Dorsolateral prefrontal cortex (tissue), 120 donors: ENCODE measurements at regions of chr10 and their contacts with region 1.

Region 1: GRCh38 chr10:43348511-43349312 is 22.7 kb upstream of the FXYD4 start:
- DNase-seq: peak; percentile 67 to 97 (median 93)
- H3K4me3 ChIP-seq: peak overlapping the region in 13 of 59 donors; percentile 1 to 64 (median 25)
- H3K27ac ChIP-seq: peak overlapping the region; percentile 49 to 96 (median 89)
- H3K27me3 ChIP-seq: no peaks in the 10 kb centered on the region
- CTCF ChIP-seq: peak; percentile 80 to 99 (median 96)

Region 2: DNA sequence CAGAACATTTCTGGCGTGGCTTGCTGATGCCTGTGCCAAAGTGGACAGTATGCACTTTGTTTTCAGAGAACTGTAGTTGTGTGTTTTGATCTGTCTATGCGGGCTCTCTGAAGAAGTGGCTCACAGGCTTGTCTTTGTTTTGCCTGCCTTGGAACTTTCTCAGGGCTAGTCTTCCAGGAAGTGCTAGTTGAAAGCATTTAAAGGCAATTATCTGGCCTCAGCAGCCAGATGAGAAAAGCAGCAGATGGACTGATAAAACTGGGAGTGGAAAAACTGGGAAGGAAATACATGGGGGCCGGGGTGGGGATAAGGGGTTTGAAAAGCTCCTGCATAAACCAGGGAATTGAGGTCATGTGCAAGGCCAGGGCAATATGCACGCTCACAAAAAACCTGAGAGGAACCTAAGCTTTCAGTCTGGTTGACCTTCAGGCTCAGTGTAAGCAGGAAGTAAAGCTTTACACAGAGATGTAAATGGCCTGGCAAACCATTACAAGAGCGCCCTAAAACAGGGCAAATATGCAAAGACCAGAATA is 804.8 kb before region 1 on chr10:
- intact Hi-C with region 1: loop called in 1 of 2 experiments (anchors 10 kb)
- DNase-seq: peak in 2 of 10 donors; percentile 24 to 55
- H3K4me3 ChIP-seq: no peak overlapping the region
- H3K27ac ChIP-seq: peak overlapping the region in 2 of 59 donors; percentile 11 to 18
- H3K27me3 ChIP-seq: no peaks in the 10 kb centered on the region
- CTCF ChIP-seq: no peak

Region 3: DNA sequence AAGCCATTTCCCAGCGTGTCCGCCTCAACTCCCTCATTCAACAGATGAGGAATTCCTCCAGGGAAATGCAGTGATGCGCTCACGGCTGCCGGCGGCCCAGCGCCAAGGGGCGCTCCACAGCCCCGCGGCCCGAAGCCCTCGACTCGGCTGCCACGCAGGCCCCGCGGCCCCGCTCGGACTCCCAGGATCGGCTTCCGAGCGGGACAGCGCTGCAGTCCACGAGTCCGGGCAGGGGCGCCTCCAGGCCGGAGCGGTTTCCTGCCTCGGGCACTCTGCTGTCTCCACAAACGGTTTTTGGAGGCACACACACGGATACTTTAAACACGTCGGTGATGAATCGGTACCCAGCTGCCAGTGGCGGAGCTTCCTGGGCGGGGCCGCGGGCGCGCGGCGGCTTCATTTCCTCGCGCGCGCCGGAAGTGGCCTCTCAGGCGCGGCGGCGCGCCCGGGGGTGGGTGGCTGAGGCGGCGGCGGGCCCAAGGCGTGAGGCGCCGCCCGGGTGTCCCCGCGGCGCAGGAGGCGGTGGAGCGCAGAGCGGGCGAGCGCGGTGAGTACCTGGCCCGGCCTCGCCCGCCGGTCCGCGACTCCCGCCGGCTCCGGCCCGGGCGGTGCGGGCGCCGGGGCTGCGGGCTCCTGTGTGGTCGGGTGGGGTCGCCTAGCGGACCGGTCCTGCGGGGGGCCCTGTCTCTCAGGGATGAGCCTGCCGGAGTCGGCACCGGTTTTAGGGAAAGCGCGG is 210.5 kb before region 1 on chr10 and contains the start of gene CSGALNACT2:
- intact Hi-C with region 1: loop called in 1 of 2 experiments (anchors 5 kb)
- DNase-seq: peak; percentile 74 to 92 (median 78)
- H3K4me3 ChIP-seq: peak within 1 kb of the TSS; percentile 63 to 99 (median 89)
- H3K27ac ChIP-seq: peak within 1 kb of the TSS; percentile 60 to 99 (median 96)
- H3K27me3 ChIP-seq: no peaks in the 10 kb centered on the region
- CTCF ChIP-seq: peak in 13 of 56 donors; percentile 2 to 27 (median 15)
- total RNA-seq, gene CSGALNACT2: 18.7 to 36.1 (median 23.8) TPM

Region 4: DNA sequence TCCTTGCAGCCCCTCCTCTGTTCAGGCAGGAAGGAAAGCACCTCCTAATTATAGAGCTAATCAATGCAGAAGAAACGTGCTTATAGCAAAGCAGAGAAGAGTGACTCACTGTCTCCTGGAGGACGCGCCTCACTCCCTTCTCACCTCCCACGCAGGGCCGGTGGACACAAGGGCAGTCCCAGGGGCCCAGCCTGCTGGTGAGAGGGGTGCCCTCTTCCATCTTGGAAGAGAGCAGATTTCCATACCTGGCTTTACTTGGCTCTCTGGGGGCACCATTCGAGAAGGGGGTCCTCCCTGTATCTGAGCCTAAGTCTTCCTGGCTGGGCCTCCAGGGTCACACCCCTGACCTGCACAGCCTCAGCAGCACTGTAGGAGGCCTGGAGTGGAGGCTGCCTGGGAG is 137.7 kb before region 1 on chr10:
- intact Hi-C with region 1: loop called (anchors 10 kb)
- DNase-seq: peak in 3 of 10 donors; percentile 39 to 56 (median 47)
- H3K4me3 ChIP-seq: no peak overlapping the region
- H3K27ac ChIP-seq: peak overlapping the region in 14 of 59 donors; percentile 2 to 67 (median 38)
- H3K27me3 ChIP-seq: no peaks in the 10 kb centered on the region
- CTCF ChIP-seq: no peak

Region 5: DNA sequence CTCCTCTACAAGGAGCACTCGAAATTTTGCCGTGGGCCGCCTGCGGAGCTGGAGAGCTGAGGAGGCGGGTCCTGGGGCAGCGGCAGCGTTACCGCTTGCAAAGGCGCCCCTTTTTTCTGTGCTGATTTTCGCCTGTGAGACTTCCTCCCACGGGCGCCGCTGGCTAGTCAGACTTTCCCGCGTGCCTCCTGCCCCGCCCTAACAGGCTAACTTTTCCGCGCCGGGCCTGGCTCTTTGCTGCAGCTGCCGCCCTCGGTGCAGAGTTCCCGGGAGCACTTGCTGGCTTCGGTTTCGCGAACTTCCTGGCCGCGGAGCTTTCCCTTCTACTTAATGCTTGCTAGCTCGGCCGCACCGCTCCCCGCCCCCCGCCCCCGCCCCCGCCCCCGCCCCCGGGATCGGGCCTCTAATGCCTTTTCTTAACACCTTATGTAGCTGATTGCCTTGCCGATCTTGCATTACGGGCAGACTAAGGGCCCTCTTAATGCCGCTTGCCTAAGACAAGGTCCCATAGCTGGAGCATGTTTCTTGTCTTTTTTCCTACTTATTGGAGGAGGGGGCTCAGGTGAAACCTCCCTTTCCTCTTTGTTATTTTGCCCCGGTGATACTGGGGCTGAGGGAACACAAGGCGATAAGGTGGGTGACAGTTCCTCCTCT is 43.9 kb before region 1 on chr10:
- intact Hi-C with region 1: no loop called
- DNase-seq: peak in 9 of 10 donors; percentile 15 to 83 (median 56)
- H3K4me3 ChIP-seq: peak overlapping the region; percentile 30 to 74 (median 50)
- H3K27ac ChIP-seq: no peak overlapping the region
- H3K27me3 ChIP-seq: peaks cover 0 to 13% (median 0%) of the 10 kb centered on the region in 45 donors
- CTCF ChIP-seq: peak in 4 of 56 donors; percentile 5 to 20 (median 10)

Region 6: GRCh38 chr10:43372765-43373361 is 24.2 kb after region 1 on chr10:
- intact Hi-C with region 1: loop called in 1 of 2 experiments (anchors 1 kb)
- DNase-seq: peak in 9 of 10 donors; percentile 65 to 87 (median 80)
- H3K4me3 ChIP-seq: peak overlapping the region in 12 of 59 donors; percentile 2 to 32 (median 15)
- H3K27ac ChIP-seq: peak overlapping the region; percentile 58 to 100 (median 96)
- H3K27me3 ChIP-seq: no peaks in the 10 kb centered on the region
- CTCF ChIP-seq: peak in 4 of 56 donors; percentile 11 to 42 (median 22)